Activated CD4-positive, alpha-beta T cell treated with anti-CD3 and anti-CD28 coated beads for 36 hours (primary cell): ENCODE measurements at regions of chr1 and their contacts with region 1.

Region 1: GRCh38 chr1:234692966-234693580 is 83.1 kb upstream of the IRF2BP2 start:
- DNase-seq: no peak
- ATAC-seq: no peak
- H3K4me3 Mint-ChIP-seq: no peak overlapping the region
- H3K27ac Mint-ChIP-seq: no peak overlapping the region
- H3K4me1 Mint-ChIP-seq: no peaks in the 10 kb centered on the region
- H3K27me3 Mint-ChIP-seq: no peaks in the 10 kb centered on the region

Region 2: DNA sequence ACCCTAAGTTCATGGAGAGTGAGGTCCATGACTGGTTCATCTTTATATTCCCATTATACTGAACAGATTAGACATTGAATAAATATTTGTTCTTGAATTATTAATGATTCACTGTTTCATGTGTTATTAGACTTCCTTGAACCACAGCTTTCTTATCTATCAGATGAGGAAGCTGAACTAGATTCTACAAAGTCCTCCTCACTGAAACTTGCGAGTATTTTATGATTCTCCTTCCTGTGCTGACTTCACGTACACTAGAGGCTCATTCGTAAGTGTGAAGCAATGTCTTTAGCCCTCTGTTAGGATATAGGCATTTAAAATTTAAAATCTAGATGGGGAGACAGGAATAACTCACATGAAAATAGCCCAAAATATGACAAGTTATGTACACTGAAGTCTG is 12.5 kb after region 1 on chr1:
- CTCF ChIA-PET with region 1: interaction called, 13 read pairs
- POLR2A ChIA-PET with region 1: no interaction called
- intact Hi-C with region 1: no loop called
- DNase-seq: no peak
- ATAC-seq: no peak
- H3K4me3 Mint-ChIP-seq: no peak overlapping the region
- H3K27ac Mint-ChIP-seq: no peak overlapping the region
- H3K4me1 Mint-ChIP-seq: peaks cover 10% of the 10 kb centered on the region
- H3K27me3 Mint-ChIP-seq: no peaks in the 10 kb centered on the region

Region 3: GRCh38 chr1:234729561-234730464 is 36.7 kb after region 1 on chr1:
- CTCF ChIA-PET with region 1: no interaction called
- POLR2A ChIA-PET with region 1: no interaction called
- intact Hi-C with region 1: no loop called
- DNase-seq: peak; percentile 33
- ATAC-seq: no peak
- H3K4me3 Mint-ChIP-seq: peak overlapping the region; percentile 32
- H3K27ac Mint-ChIP-seq: peak overlapping the region; percentile 92
- H3K4me1 Mint-ChIP-seq: peaks cover 79% of the 10 kb centered on the region
- H3K27me3 Mint-ChIP-seq: no peaks in the 10 kb centered on the region

Region 4: DNA sequence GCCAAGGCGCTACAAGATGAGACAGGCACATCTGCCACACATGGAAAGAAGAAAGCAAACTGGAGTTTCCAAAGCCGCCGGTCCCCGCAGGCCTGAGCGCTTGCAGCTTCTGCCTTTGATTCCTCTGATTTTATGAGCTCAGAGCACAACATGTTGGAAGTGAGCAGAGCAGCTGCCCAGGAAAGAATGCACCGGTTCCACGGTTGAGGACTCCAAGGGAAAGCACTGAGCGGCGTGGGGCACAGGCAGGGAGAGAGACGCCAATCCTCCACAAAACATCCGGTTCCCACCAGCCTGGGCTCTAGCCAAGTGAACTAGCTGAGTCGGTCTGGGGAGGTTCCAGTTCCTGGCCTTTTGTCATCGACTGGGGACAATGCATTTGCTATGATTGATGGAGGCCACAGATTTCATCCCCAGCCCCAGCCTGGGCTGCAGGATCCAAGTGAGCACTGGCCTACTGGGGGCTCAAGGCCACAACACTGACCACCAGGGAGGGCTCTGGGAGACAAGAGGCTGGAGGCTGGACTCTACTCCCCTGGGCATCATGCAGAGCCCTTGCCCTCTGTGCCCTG is 170.0 kb after region 1 on chr1:
- CTCF ChIA-PET with region 1: no interaction called
- POLR2A ChIA-PET with region 1: no interaction called
- intact Hi-C with region 1: no loop called
- DNase-seq: no peak
- ATAC-seq: no peak
- H3K4me3 Mint-ChIP-seq: no peak overlapping the region
- H3K27ac Mint-ChIP-seq: no peak overlapping the region
- H3K4me1 Mint-ChIP-seq: peaks cover 20% of the 10 kb centered on the region
- H3K27me3 Mint-ChIP-seq: no peaks in the 10 kb centered on the region